Posterior cingulate gyrus (tissue), 11 donors: ENCODE measurements at regions of chr2 and their contacts with region 1.

Region 1: DNA sequence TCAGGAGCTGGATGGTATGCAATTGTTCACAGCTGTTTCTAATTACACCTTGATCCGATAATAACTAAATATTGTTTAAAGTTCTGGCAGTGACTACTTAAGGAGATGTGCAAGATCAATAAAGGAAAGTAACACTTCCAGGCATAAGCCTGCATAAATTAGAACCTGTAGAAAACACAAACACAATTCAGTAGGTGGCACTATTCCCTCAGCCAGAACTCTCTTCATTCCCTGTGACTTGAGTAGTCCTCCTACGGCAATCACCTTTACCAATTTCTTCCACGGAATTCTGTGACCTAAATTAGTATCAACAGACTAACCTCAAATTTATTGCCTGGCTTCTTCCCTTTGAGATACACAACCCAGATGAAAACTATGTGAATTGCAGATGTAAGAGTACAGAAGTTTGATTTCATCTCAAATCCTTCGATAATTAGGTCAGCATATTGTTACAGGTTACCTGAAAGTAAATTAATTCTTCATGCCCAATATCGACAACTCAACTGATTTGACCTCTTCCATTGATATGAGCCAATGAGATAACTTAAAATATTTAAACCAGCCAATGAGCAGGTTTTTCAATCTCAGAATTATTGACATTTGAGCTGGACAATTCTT is 137.8 kb downstream of the PID1 start:
- DNase-seq: no peak

Region 2: DNA sequence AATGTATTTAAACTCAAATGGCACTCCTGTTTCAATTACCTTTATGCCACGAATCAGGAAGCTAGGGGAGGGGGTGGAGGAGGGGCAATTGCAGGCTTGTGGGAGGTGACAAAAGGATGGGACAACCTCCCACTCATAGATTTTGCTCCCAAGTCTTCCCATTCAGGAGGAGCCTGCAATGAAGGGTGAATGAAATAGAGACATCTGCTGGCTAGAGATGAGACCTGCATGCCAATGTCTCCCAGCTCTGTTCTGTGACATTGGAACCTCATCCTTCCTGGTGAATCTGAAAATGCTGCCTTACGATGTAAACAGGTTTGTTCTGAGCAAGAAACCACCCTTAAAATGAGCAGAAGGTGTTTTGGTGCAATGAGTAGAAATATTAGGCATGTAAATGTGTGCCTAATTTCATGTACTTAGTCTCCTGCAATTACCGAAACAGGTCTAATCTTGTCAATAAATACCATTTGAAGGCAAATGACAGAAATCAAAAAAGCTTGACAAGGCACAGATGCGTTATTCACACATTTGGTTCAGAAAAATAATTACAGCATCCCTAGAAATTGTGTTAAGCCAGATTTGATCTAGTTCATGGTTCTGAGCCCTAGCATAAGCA is 140.6 kb after region 1 on chr2:
- intact Hi-C with region 1: loop called (anchors 2 kb)
- DNase-seq: peak in 5 of 10 donors; percentile 32 to 83 (median 40)